ENCODE measurements at regions of chr2 and their contacts with region 1.

Region 1: GRCh38 chr2:176554101-176555048 is 285.1 kb downstream of the MTX2 start:
- DNase-seq: peak; percentile 89
- H3K4me3 ChIP-seq: peak overlapping the region; percentile 11 to 48 (median 44)
- H3K27ac ChIP-seq: peak overlapping the region; percentile 77
- H3K4me1 ChIP-seq: peaks cover 13% of the 10 kb centered on the region
- H3K27me3 ChIP-seq: no peaks in the 10 kb centered on the region
- CTCF ChIP-seq: peak; percentile 47 to 65
- POLR2A ChIP-seq: no peak

Region 2: GRCh38 chr2:176151442-176152369 is 402.7 kb before region 1 on chr2 and contains the start of gene HOXD4:
- CTCF ChIA-PET with region 1: interaction called, 11 read pairs
- POLR2A ChIA-PET with region 1: no interaction called
- dilution Hi-C with region 1: no loop called
- intact Hi-C with region 1: no loop called
- DNase-seq: no peak
- H3K4me3 ChIP-seq: no peak within 1 kb of the TSS
- H3K27ac ChIP-seq: no peak within 1 kb of the TSS
- H3K4me1 ChIP-seq: no peaks in the 10 kb centered on the region
- H3K27me3 ChIP-seq: no peaks in the 10 kb centered on the region
- CTCF ChIP-seq: no peak
- POLR2A ChIP-seq: no peak
- total RNA-seq, gene HOXD4: 11.5 and 13.7 TPM in 2 replicates

Region 3: GRCh38 chr2:176187899-176188773 is 366.2 kb before region 1 on chr2 and contains the start of gene HOXD1:
- CTCF ChIA-PET with region 1: interaction called, 14 read pairs
- POLR2A ChIA-PET with region 1: no interaction called
- dilution Hi-C with region 1: no loop called
- intact Hi-C with region 1: loop called (anchors 2 kb)
- DNase-seq: peak; percentile 83
- H3K4me3 ChIP-seq: peak within 1 kb of the TSS; percentile 86 to 96 (median 93)
- H3K27ac ChIP-seq: peak within 1 kb of the TSS; percentile 74
- H3K4me1 ChIP-seq: peaks cover 33% of the 10 kb centered on the region
- H3K27me3 ChIP-seq: no peaks in the 10 kb centered on the region
- CTCF ChIP-seq: no peak
- POLR2A ChIP-seq: peak; percentile 86
- total RNA-seq, gene HOXD1: 10.4 and 14.1 TPM in 2 replicates

Region 4: GRCh38 chr2:176473177-176473576 is 81.2 kb before region 1 on chr2:
- CTCF ChIA-PET with region 1: interaction called, 18 read pairs
- POLR2A ChIA-PET with region 1: no interaction called
- dilution Hi-C with region 1: no loop called
- intact Hi-C with region 1: no loop called
- DNase-seq: peak; percentile 58
- H3K4me3 ChIP-seq: peak overlapping the region in 2 of 3 experiments; percentile 19 to 38
- H3K27ac ChIP-seq: no peak overlapping the region
- H3K4me1 ChIP-seq: peaks cover 4% of the 10 kb centered on the region
- H3K27me3 ChIP-seq: no peaks in the 10 kb centered on the region
- CTCF ChIP-seq: no peak
- POLR2A ChIP-seq: no peak

Region 5: GRCh38 chr2:176582990-176583481 is 28.7 kb after region 1 on chr2:
- CTCF ChIA-PET with region 1: interaction called, 21 read pairs
- POLR2A ChIA-PET with region 1: no interaction called
- dilution Hi-C with region 1: no loop called
- intact Hi-C with region 1: loop called (anchors 1 kb)
- DNase-seq: peak; percentile 92
- H3K4me3 ChIP-seq: peak overlapping the region in 2 of 3 experiments; percentile 13 to 35
- H3K27ac ChIP-seq: peak overlapping the region; percentile 91
- H3K4me1 ChIP-seq: peaks cover 30% of the 10 kb centered on the region
- H3K27me3 ChIP-seq: no peaks in the 10 kb centered on the region
- CTCF ChIP-seq: no peak
- POLR2A ChIP-seq: no peak

Region 6: GRCh38 chr2:176653479-176654443 is 99.4 kb after region 1 on chr2:
- CTCF ChIA-PET with region 1: interaction called, 29 read pairs
- POLR2A ChIA-PET with region 1: no interaction called
- dilution Hi-C with region 1: no loop called
- intact Hi-C with region 1: loop called (anchors 1 kb)
- DNase-seq: peak; percentile 86
- H3K4me3 ChIP-seq: no peak overlapping the region
- H3K27ac ChIP-seq: no peak overlapping the region
- H3K4me1 ChIP-seq: peaks cover 7% of the 10 kb centered on the region
- H3K27me3 ChIP-seq: peaks cover 0 to 8% of the 10 kb centered on the region in 2 experiments
- CTCF ChIP-seq: peak; percentile 69 to 76
- POLR2A ChIP-seq: no peak

Measured in endothelial cell of umbilical vein (primary cell).